ENCODE measurements at regions of chr9 and their contacts with region 1.

Region 1: GRCh38 chr9:96854073-96854876 is at the start of gene ZNF782:
- DNase-seq: peak; percentile 81
- H3K4me3 Mint-ChIP-seq: peak within 1 kb of the TSS; percentile 100
- H3K27ac Mint-ChIP-seq: peak within 1 kb of the TSS; percentile 99
- H3K4me1 Mint-ChIP-seq: peaks cover 43% of the 10 kb centered on the region
- H3K27me3 Mint-ChIP-seq: peaks cover 21% of the 10 kb centered on the region
- total RNA-seq, gene ZNF782: 3.8 and 4.4 TPM in 2 replicates

Region 2: GRCh38 chr9:96441798-96442445 is 412.4 kb before region 1 on chr9:
- intact Hi-C with region 1: loop called (anchors 5 kb)
- DNase-seq: peak; percentile 16
- H3K4me3 Mint-ChIP-seq: no peak overlapping the region
- H3K27ac Mint-ChIP-seq: no peak overlapping the region
- H3K4me1 Mint-ChIP-seq: no peaks in the 10 kb centered on the region
- H3K27me3 Mint-ChIP-seq: peaks cover 8% of the 10 kb centered on the region

Region 3: DNA sequence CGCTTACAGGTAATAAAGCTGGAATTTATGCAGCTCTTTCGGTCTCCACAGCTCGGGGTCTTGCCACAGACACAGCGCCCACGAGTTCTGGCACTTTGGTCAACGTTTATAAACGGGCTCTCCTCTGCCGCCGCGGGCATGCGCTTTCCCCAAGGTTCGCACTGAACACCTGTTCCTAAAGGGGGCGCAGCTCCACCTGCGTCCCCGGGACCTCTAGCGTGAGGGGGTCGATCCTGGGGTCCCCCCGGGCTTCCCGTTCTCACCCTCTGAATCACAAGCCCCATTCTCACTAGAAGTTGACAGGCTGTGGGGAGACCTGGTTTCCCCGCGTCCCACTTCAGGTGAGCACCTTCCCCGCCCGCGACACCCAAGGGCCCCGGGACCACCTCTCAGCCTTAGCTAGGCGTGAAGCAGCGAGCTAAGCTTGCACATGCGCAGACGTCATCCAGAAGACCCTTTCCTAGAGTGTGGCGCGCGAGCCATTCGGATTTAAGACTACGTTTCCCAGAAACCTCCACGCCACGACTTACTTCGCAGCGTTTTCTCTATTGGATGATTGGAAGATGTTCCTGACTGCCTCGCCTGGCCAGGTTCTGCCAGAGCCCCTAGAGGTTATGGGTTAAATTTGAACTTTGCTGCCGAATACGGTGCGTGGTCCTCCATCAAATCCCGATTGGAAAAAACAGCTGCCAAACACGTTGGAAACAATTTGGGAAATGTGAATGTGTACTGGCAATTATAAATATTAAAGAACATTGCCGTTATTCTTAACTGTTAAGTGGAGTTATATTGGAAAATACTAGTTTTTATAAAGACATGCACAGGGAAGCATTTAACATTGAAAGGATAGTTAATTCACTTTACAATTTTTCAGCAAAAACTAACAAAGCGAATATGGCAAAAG is 21.4 kb after region 1 on chr9:
- intact Hi-C with region 1: loop called (anchors 1 kb)
- DNase-seq: peak; percentile 44
- H3K4me3 Mint-ChIP-seq: peak overlapping the region; percentile 89
- H3K27ac Mint-ChIP-seq: peak overlapping the region; percentile 86
- H3K4me1 Mint-ChIP-seq: peaks cover 31% of the 10 kb centered on the region
- H3K27me3 Mint-ChIP-seq: peaks cover 17% of the 10 kb centered on the region

Region 4: DNA sequence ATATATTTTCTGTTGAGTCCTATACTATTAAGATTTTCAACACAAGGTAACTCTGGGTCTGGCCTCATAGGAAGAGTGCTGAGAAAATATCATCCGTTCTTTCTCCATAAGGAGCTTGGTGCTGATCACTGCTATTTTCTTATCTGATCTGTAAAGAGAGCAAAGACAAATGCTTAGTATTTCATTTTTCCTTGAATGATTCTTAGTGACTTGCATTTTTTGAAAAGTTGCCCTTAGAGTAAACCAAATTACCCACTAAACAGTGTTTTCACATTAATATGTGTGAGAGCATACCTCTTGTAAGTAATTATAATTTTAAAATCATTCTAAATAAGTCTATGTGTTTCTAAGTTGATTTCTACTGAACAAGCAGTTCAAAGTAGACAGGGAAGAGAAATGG is 306.0 kb after region 1 on chr9:
- intact Hi-C with region 1: loop called (anchors 5 kb)
- DNase-seq: no peak
- H3K4me3 Mint-ChIP-seq: no peak overlapping the region
- H3K27ac Mint-ChIP-seq: no peak overlapping the region
- H3K4me1 Mint-ChIP-seq: no peaks in the 10 kb centered on the region
- H3K27me3 Mint-ChIP-seq: peaks cover 4% of the 10 kb centered on the region

Region 5: GRCh38 chr9:97386733-97387503 is 532.6 kb after region 1 on chr9:
- intact Hi-C with region 1: loop called (anchors 2 kb)
- DNase-seq: peak; percentile 63
- H3K4me3 Mint-ChIP-seq: no peak overlapping the region
- H3K27ac Mint-ChIP-seq: no peak overlapping the region
- H3K4me1 Mint-ChIP-seq: peaks cover 41% of the 10 kb centered on the region
- H3K27me3 Mint-ChIP-seq: peaks cover 33% of the 10 kb centered on the region

Region 6: GRCh38 chr9:97598461-97599288 is 744.4 kb after region 1 on chr9:
- intact Hi-C with region 1: loop called (anchors 1 kb)
- DNase-seq: peak; percentile 60
- H3K4me3 Mint-ChIP-seq: no peak overlapping the region
- H3K27ac Mint-ChIP-seq: no peak overlapping the region
- H3K4me1 Mint-ChIP-seq: peaks cover 9% of the 10 kb centered on the region
- H3K27me3 Mint-ChIP-seq: no peaks in the 10 kb centered on the region